GM12878 (cell line): ENCODE measurements at regions of chr15 and their contacts with region 1.

Region 1: GRCh38 chr15:65916664-65917406 is 47.5 kb downstream of the RAB11A start:
- DNase-seq: peak; percentile 84
- ATAC-seq: peak; percentile 85
- H3K4me3 ChIP-seq: 0 out of 2 replicates have a peak overlapping the region, but pooled peaks have one; percentile 13
- H3K27ac ChIP-seq: peak overlapping the region; percentile 85
- H3K4me1 ChIP-seq: peaks cover 67% of the 10 kb centered on the region
- H3K27me3 ChIP-seq: no peaks in the 10 kb centered on the region
- CTCF ChIP-seq: peak; percentile 69 to 97 (median 90); a peak in 5 of 6 replicates
- EP300 ChIP-seq: peak; percentile 79 to 90; a peak in 3 of 4 replicates
- POLR2A ChIP-seq: 0 out of 2 replicates have a peak, but pooled peaks have one; percentile 13
- RAD21 ChIP-seq: peak; percentile 90

Region 2: GRCh38 chr15:64856429-64857145 is 1060.2 kb before region 1 on chr15:
- CTCF ChIA-PET with region 1: no interaction called
- POLR2A ChIA-PET with region 1: no interaction called
- RAD21 ChIA-PET with region 1: no interaction called
- SMC1A ChIA-PET with region 1: no interaction called
- in situ Hi-C with region 1: no loop called
- intact Hi-C with region 1: no loop called
- DNase-seq: no peak
- ATAC-seq: no peak
- H3K4me3 ChIP-seq: no peak overlapping the region
- H3K27ac ChIP-seq: no peak overlapping the region
- H3K4me1 ChIP-seq: no peaks in the 10 kb centered on the region
- H3K27me3 ChIP-seq: no peaks in the 10 kb centered on the region
- CTCF ChIP-seq: no peak
- EP300 ChIP-seq: no peak
- POLR2A ChIP-seq: no peak
- RAD21 ChIP-seq: no peak

Region 3: DNA sequence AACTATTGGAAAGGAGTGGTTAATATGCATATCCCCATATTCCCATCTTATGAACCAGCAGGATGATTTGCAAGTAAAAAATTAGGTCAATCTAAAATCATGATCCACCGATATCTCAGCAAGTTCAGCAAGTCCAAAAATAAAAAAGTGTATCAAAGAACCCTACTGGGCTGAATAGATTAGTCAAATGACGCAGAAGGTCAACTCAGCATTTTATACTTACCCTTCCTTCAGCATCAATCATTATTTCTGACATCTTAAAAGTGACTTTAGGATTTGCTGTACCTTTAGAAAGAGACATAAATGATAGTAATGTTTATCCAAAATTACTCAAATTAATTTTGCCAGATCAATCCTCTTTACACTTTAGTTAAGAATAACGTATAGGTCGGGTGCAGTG is 432.0 kb before region 1 on chr15:
- CTCF ChIA-PET with region 1: no interaction called
- POLR2A ChIA-PET with region 1: no interaction called
- RAD21 ChIA-PET with region 1: no interaction called
- SMC1A ChIA-PET with region 1: no interaction called
- in situ Hi-C with region 1: no loop called
- intact Hi-C with region 1: no loop called
- DNase-seq: no peak
- ATAC-seq: no peak
- H3K4me3 ChIP-seq: no peak overlapping the region
- H3K27ac ChIP-seq: no peak overlapping the region
- H3K4me1 ChIP-seq: no peaks in the 10 kb centered on the region
- H3K27me3 ChIP-seq: no peaks in the 10 kb centered on the region
- CTCF ChIP-seq: no peak
- EP300 ChIP-seq: no peak
- POLR2A ChIP-seq: no peak
- RAD21 ChIP-seq: no peak

Region 4: GRCh38 chr15:65792130-65792987 is 124.5 kb before region 1 on chr15 and contains the start of gene DENND4A:
- CTCF ChIA-PET with region 1: no interaction called
- POLR2A ChIA-PET with region 1: interaction called, 5 read pairs
- RAD21 ChIA-PET with region 1: interaction called, 24 read pairs
- SMC1A ChIA-PET with region 1: interaction called, 4 read pairs
- in situ Hi-C with region 1: no loop called
- intact Hi-C with region 1: no loop called
- DNase-seq: peak; percentile 97
- ATAC-seq: peak; percentile 79
- H3K4me3 ChIP-seq: peak within 1 kb of the TSS; percentile 96
- H3K27ac ChIP-seq: peak within 1 kb of the TSS; percentile 99
- H3K4me1 ChIP-seq: peaks cover 18% of the 10 kb centered on the region
- H3K27me3 ChIP-seq: no peaks in the 10 kb centered on the region
- CTCF ChIP-seq: no peak
- EP300 ChIP-seq: peak; percentile 90 to 96
- POLR2A ChIP-seq: peak; percentile 92
- RAD21 ChIP-seq: no peak
- polyA plus RNA-seq, gene DENND4A: 14.2 to 15.4 TPM

Region 5: DNA sequence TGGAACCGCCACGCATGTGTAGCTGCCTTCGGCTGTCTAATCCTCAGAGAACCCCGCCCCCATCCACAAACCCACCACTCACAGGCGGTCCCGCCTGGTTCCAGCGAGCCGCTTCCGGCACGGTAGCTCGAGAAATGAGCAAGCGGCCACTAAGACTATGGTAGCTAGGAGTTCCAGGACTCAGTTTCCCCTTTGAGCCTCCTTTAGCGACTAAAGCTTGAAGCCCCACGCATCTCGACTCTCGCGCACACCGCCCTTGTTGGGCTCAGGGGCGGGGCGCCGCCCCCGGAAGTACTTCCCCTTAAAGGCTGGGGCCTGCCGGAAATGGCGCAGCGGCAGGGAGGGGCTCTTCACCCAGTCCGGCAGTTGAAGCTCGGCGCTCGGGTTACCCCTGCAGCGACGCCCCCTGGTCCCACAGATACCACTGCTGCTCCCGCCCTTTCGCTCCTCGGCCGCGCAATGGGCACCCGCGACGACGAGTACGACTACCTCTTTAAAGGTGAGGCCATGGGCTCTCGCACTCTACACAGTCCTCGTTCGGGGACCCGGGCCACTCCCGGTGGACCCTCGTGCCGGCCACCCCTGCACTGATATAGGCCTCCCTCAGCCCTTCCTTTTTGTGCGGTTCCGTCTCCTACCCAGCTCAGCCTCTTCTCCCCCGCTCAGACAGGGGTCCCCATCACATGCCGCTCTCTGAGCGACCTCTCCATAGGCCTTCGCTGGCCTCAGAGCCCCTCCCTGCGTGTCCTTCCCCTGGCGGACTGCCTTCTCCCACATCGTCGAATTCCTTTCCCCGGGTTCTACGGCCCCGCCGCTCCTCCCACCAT is 47.5 kb before region 1 on chr15 and contains the start of gene RAB11A:
- CTCF ChIA-PET with region 1: interaction called, 17 read pairs
- POLR2A ChIA-PET with region 1: interaction called, 19 read pairs
- RAD21 ChIA-PET with region 1: interaction called, 34 read pairs
- SMC1A ChIA-PET with region 1: interaction called, 17 read pairs
- in situ Hi-C with region 1: no loop called
- intact Hi-C with region 1: no loop called
- DNase-seq: peak; percentile 85
- ATAC-seq: peak; percentile 95
- H3K4me3 ChIP-seq: peak within 1 kb of the TSS; percentile 71
- H3K27ac ChIP-seq: peak within 1 kb of the TSS; percentile 80
- H3K4me1 ChIP-seq: no peaks in the 10 kb centered on the region
- H3K27me3 ChIP-seq: no peaks in the 10 kb centered on the region
- CTCF ChIP-seq: peak; percentile 45 to 60 (median 45); a peak in 5 of 6 replicates
- EP300 ChIP-seq: no peak
- POLR2A ChIP-seq: peak; percentile 92
- RAD21 ChIP-seq: peak; percentile 33; the same call in 1 of the 2 replicates
- polyA plus RNA-seq, gene RAB11A: 155 to 179 TPM

Region 6: DNA sequence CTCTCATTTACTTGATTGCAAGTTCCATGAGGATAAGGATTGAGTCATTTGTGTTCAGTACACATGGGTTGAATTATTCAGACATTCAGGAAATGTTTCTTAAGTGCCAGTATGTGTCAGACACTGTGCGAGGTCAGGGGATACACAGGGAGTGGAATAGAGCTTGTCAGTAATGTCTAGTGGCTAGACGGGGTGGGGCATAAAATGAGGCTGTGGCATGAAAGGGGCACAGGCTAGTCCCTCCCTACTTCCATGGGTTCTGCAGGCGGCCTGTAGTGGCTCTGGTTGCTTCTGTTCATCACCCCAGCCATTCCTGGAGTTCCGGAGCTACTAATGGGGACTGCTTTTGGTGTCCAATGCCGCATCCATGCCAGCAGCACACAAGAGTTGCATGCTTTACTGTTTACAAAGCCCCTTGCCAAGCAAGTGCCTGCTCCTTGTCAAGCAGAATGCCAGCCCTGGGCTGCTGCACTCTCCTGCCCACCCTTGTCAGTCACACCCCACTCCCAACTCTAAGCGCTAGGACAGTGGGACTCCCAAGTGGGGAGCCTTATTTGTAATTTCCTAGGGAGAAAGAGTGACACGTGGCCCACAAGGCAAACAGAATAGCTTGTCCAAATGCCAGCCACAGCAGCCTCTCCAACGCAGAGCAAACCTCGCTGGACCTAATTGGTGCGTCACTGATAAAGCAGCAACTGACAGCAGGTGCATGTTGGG is 23.2 kb after region 1 on chr15:
- CTCF ChIA-PET with region 1: interaction called, 7 read pairs
- POLR2A ChIA-PET with region 1: no interaction called
- RAD21 ChIA-PET with region 1: interaction called, 5 read pairs
- SMC1A ChIA-PET with region 1: interaction called, 15 read pairs
- in situ Hi-C with region 1: no loop called
- intact Hi-C with region 1: no loop called
- DNase-seq: no peak
- ATAC-seq: no peak
- H3K4me3 ChIP-seq: no peak overlapping the region
- H3K27ac ChIP-seq: no peak overlapping the region
- H3K4me1 ChIP-seq: no peaks in the 10 kb centered on the region
- H3K27me3 ChIP-seq: no peaks in the 10 kb centered on the region
- CTCF ChIP-seq: no peak
- EP300 ChIP-seq: no peak
- POLR2A ChIP-seq: no peak
- RAD21 ChIP-seq: no peak

Region 7: GRCh38 chr15:65980824-65981456 is 64.1 kb after region 1 on chr15:
- CTCF ChIA-PET with region 1: interaction called, 19 read pairs
- POLR2A ChIA-PET with region 1: interaction called, 3 read pairs
- RAD21 ChIA-PET with region 1: interaction called, 14 read pairs
- SMC1A ChIA-PET with region 1: interaction called, 21 read pairs
- in situ Hi-C with region 1: no loop called
- intact Hi-C with region 1: loop called (anchors 2 kb)
- DNase-seq: no peak
- ATAC-seq: peak; percentile 43
- H3K4me3 ChIP-seq: no peak overlapping the region
- H3K27ac ChIP-seq: no peak overlapping the region
- H3K4me1 ChIP-seq: no peaks in the 10 kb centered on the region; the same call in 1 of the 2 replicates
- H3K27me3 ChIP-seq: peaks cover 0 to 1% of the 10 kb centered on the region in 2 experiments; a peak in 1 of 4 replicates
- CTCF ChIP-seq: peak; percentile 53 to 68 (median 56)
- EP300 ChIP-seq: no peak
- POLR2A ChIP-seq: no peak
- RAD21 ChIP-seq: peak; percentile 52

Region 8: DNA sequence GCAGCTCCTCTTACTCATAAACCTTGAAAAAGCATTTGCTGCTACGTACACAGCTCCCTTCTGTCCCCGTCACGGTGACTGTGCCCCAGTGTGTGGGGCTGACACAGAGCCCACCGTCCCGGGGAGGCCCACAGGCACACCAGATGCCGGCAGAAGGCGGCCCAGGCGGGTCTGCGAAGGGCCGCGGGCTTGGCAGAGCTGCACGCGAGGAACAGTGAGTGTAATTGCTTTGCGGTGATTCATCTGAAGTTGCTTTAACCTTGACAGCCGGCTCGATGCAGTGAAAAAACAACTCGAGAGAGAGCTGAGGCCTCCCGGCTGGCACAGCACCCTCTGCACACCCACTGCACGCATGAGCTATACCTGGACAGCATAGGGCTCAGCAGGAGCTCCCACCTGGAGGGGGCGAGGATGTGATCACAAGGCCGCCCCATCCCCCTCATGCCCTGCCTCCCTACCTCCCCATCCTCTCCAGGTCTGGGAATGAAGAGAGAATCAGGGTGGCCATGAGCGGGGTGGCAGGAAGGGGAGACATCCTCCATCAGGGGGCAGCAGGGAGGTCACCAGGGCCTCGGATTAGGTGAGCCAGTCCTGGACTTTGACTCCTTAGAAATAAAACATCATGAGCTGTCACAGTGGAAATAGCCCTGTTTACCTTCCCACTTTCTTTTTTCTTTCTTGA is 164.0 kb after region 1 on chr15:
- CTCF ChIA-PET with region 1: interaction called, 42 read pairs
- POLR2A ChIA-PET with region 1: interaction called, 4 read pairs
- RAD21 ChIA-PET with region 1: interaction called, 19 read pairs
- SMC1A ChIA-PET with region 1: interaction called, 16 read pairs
- in situ Hi-C with region 1: no loop called
- intact Hi-C with region 1: loop called (anchors 1 kb)
- DNase-seq: no peak
- ATAC-seq: peak; percentile 32; the same call in 2 of the 3 replicates
- H3K4me3 ChIP-seq: no peak overlapping the region
- H3K27ac ChIP-seq: no peak overlapping the region
- H3K4me1 ChIP-seq: no peaks in the 10 kb centered on the region
- H3K27me3 ChIP-seq: no peaks in the 10 kb centered on the region; a peak in 1 of 4 replicates
- CTCF ChIP-seq: 0 out of 6 replicates have a peak, but pooled peaks of 2 of the 3 experiments have one; percentile 0 to 11
- EP300 ChIP-seq: no peak
- POLR2A ChIP-seq: no peak
- RAD21 ChIP-seq: 0 out of 2 replicates have a peak, but pooled peaks have one; percentile 10

Region 9: DNA sequence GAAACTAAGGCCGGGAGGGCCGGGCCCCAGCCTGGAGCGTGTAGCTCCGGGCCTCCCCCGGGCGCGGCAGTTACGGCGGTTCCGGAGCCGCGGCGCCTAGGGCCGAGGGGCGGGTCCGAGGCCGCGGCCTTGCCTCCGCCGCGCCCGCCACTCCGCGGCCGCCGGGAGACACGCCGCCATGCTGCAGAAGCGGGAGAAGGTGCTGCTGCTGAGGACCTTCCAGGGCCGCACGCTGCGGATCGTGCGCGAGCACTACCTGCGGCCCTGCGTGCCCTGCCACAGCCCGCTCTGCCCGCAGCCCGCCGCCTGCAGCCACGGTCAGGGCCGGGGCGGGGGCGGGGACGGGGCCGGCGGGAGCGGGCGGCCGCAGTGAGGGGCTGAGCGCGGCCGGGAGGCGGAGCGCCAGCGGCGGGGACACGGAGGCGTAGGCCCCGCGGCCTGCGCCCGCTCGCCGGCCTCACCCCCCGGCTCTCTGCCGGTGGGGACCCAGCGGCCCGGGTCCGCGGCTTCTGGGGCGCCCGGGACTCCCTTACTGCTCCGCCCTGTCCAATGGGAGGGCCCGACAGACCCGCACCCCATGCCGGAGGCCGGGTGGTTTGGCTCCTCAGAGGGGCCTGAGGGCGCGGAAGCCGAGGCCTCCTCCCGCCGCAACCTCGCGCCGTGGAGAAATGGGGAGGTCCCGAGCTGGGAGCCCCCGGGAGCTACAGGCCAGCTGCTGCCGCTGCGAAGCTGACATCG is 376.8 kb after region 1 on chr15 and contains the start of gene DIS3L:
- CTCF ChIA-PET with region 1: interaction called, 11 read pairs
- POLR2A ChIA-PET with region 1: no interaction called
- RAD21 ChIA-PET with region 1: interaction called, 7 read pairs
- SMC1A ChIA-PET with region 1: interaction called, 10 read pairs
- in situ Hi-C with region 1: no loop called
- intact Hi-C with region 1: no loop called
- DNase-seq: peak; percentile 8
- ATAC-seq: peak; percentile 82
- H3K4me3 ChIP-seq: peak within 1 kb of the TSS; percentile 71
- H3K27ac ChIP-seq: peak within 1 kb of the TSS; percentile 76
- H3K4me1 ChIP-seq: peaks cover 3% of the 10 kb centered on the region; the same call in 1 of the 2 replicates
- H3K27me3 ChIP-seq: no peaks in the 10 kb centered on the region
- CTCF ChIP-seq: no peak
- EP300 ChIP-seq: no peak
- POLR2A ChIP-seq: peak; percentile 86
- RAD21 ChIP-seq: no peak
- polyA plus RNA-seq, gene DIS3L: 7.6 to 12.8 TPM